GM12878 (cell line): ENCODE measurements at regions of chr21 and their contacts with region 1.

Region 1: DNA sequence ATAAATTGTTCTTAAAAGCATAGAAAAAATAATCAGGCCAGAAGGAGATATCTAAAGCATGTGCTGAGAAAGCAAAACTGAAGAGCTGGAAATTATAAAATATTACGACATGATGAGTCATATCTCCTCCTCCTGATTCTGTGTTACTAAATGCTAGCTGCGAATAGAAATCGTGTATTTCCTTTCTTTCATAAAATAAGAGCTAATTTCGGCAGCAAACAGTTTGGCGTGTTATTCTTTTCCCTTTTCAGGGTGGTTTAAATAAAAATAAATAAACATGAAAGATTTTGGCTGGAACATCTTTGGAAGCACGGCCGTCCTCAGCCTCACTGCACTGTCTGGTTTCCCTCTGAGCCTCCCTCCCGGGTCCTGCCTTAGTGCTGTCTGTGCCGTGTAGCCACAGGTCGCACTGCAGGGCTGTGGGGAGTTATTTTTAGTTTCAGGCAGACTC is 56.0 kb downstream of the ADARB1 start:
- DNase-seq: no peak
- ATAC-seq: peak; percentile 85
- H3K4me3 ChIP-seq: no peak overlapping the region
- H3K27ac ChIP-seq: no peak overlapping the region
- H3K4me1 ChIP-seq: peaks cover 3% of the 10 kb centered on the region
- H3K27me3 ChIP-seq: peaks cover 0 to 2% of the 10 kb centered on the region in 2 experiments; a peak in 2 of 4 replicates
- CTCF ChIP-seq: no peak
- EP300 ChIP-seq: no peak
- POLR2A ChIP-seq: no peak
- RAD21 ChIP-seq: no peak

Region 2: DNA sequence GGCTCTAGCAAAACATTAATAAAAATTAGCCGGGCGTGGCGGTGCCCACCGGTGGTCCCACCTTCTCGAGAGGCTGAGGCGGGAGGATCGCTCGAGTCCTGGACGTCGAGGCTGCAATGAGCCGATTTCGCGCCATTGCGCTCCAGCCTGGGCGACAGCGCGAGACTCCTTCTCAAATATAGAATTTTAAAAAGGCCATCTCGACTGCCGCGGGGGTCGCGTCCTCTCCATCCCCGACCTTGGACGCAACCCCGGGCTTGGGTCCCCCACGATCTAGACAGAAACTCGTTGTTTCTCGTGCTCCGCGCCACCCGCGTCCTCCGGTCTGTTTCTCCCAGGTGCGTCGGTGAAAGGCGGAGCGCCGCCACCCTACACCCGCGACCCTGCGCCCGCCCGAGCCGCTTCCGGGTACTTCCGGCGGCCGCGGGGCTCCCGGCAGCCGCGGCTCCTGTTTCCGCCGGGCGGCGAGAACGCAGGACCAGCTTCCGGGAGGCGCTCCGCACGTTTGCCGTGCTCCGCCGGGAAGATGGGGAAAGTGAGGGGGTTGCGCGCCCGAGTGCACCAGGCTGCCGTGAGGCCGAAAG is 190.7 kb before region 1 on chr21 and contains the start of gene SLX9:
- CTCF ChIA-PET with region 1: interaction called, 235 read pairs
- POLR2A ChIA-PET with region 1: no interaction called
- RAD21 ChIA-PET with region 1: interaction called, 141 read pairs
- SMC1A ChIA-PET with region 1: interaction called, 153 read pairs
- in situ Hi-C with region 1: no loop called
- intact Hi-C with region 1: no loop called
- DNase-seq: no peak
- ATAC-seq: peak; percentile 92
- H3K4me3 ChIP-seq: peak within 1 kb of the TSS; percentile 92
- H3K27ac ChIP-seq: peak within 1 kb of the TSS; percentile 50
- H3K4me1 ChIP-seq: peaks cover 18% of the 10 kb centered on the region
- H3K27me3 ChIP-seq: no peaks in the 10 kb centered on the region
- CTCF ChIP-seq: no peak
- EP300 ChIP-seq: no peak
- POLR2A ChIP-seq: peak; percentile 88
- RAD21 ChIP-seq: no peak
- polyA plus RNA-seq, gene SLX9: 0.69 to 5.5 TPM

Region 3: GRCh38 chr21:44958471-44959191 is 171.7 kb before region 1 on chr21:
- CTCF ChIA-PET with region 1: interaction called, 47 read pairs
- POLR2A ChIA-PET with region 1: no interaction called
- RAD21 ChIA-PET with region 1: interaction called, 141 read pairs
- SMC1A ChIA-PET with region 1: interaction called, 10 read pairs
- in situ Hi-C with region 1: no loop called
- intact Hi-C with region 1: no loop called
- DNase-seq: no peak
- ATAC-seq: no peak
- H3K4me3 ChIP-seq: no peak overlapping the region
- H3K27ac ChIP-seq: no peak overlapping the region
- H3K4me1 ChIP-seq: no peaks in the 10 kb centered on the region
- H3K27me3 ChIP-seq: no peaks in the 10 kb centered on the region
- CTCF ChIP-seq: no peak
- EP300 ChIP-seq: no peak
- POLR2A ChIP-seq: no peak
- RAD21 ChIP-seq: no peak

Region 4: DNA sequence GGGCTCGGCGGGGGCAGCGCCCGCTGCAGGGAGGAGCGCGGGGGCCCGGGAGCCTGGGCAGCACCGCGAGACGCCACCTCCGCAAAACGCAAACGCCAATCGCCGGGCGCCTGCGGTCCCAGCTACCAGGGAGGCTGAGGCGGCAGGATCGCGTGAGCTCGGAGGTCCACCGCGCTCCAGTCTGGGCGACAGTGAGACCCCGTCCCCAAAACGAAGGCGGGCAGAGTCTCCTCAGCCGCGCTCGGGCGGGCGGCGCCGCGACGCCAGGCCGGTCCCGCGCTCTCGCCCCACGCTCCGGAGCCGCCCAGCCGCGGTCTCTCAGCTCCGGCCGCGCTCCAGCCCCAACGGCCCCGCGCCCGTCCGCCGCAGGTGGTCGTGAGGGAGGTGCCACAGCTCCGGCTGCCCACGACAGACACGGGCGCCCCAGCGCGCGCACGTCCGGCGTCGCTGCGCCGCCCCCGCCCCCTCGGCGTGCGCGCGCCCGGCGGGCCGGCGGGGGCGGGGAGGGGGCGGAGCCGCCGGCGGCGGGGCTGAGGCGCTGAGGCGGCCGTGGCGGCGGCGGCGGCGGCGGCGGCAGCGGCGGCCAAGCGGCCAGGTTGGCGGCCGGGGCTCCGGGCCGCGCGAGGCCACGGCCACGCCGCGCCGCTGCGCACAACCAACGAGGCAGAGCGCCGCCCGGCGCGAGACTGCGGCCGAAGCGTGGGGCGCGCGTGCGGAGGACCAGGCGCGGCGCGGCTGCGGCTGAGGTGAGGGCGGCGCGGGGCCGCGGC is 56.1 kb before region 1 on chr21 and contains the start of gene ADARB1:
- CTCF ChIA-PET with region 1: interaction called, 50 read pairs
- POLR2A ChIA-PET with region 1: interaction called, 4 read pairs
- RAD21 ChIA-PET with region 1: interaction called, 62 read pairs
- SMC1A ChIA-PET with region 1: interaction called, 77 read pairs
- in situ Hi-C with region 1: no loop called
- intact Hi-C with region 1: loop called (anchors 2 kb)
- DNase-seq: no peak
- ATAC-seq: peak; percentile 43
- H3K4me3 ChIP-seq: peak within 1 kb of the TSS; percentile 80; the same call in 1 of the 2 replicates
- H3K27ac ChIP-seq: no peak within 1 kb of the TSS
- H3K4me1 ChIP-seq: 0 out of 2 replicates have a peak, but pooled peaks cover 5% of the 10 kb centered on the region
- H3K27me3 ChIP-seq: peaks cover 0 to 9% of the 10 kb centered on the region in 2 experiments; a peak in 2 of 4 replicates
- CTCF ChIP-seq: no peak
- EP300 ChIP-seq: no peak
- POLR2A ChIP-seq: peak; percentile 76
- RAD21 ChIP-seq: no peak
- polyA plus RNA-seq, gene ADARB1: 5.7 to 9.0 TPM

Region 5: GRCh38 chr21:45098867-45099266 is 31.5 kb before region 1 on chr21:
- CTCF ChIA-PET with region 1: interaction called, 626 read pairs
- POLR2A ChIA-PET with region 1: interaction called, 14 read pairs
- RAD21 ChIA-PET with region 1: interaction called, 204 read pairs
- SMC1A ChIA-PET with region 1: interaction called, 560 read pairs
- in situ Hi-C with region 1: no loop called
- intact Hi-C with region 1: loop called (anchors 1 kb)
- DNase-seq: no peak
- ATAC-seq: peak; percentile 77
- H3K4me3 ChIP-seq: no peak overlapping the region
- H3K27ac ChIP-seq: no peak overlapping the region
- H3K4me1 ChIP-seq: peaks cover under 1% of the 10 kb centered on the region
- H3K27me3 ChIP-seq: no peaks in the 10 kb centered on the region; a peak in 1 of 4 replicates
- CTCF ChIP-seq: peak; percentile 59 to 63 (median 62)
- EP300 ChIP-seq: no peak
- POLR2A ChIP-seq: no peak
- RAD21 ChIP-seq: peak; percentile 61

Region 6: DNA sequence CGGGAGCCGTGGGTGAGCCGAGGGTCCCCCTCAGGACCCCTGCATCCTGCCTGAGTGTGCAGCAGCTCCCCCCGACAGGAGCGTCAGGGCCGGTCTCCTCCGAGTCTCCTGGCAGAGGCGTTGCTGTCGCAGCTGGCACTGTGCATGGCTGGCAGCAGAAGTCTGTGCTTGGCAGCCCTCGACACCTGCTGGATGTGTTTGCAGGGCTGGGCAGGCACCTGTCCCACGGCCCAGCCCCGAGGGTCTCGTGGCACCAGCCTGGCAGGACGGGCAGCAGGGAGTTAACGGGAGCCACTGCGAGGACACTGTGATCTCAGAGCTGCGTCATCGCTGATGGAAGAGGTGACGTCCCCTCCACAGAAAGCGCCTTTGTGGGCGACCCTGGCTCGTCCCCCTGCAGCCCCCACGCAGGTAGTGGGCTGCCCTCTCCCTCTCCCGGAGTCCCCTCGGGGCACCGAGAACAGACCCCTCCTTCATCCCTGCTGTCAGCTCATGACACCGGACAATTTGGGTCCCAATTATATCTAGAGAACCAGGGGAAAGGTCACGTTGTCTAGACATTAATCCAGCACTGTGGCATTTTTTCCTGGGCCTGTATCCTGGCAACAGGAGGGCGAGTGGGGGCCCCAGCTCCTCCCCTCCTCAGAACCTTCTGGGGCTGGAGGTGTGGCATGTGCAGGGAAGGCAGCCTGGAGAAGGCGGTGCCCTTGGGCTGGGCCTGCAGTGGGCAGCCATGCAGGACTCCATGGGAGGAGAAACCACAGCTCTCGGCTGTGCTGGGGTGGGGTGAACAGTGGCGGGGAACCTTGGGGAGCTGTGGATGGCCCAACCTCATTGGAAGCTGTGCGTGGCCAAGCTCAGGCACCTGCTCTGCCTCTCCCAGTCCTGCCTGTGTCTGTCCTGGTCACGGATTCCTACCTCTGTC is 290.0 kb after region 1 on chr21:
- CTCF ChIA-PET with region 1: no interaction called
- POLR2A ChIA-PET with region 1: no interaction called
- RAD21 ChIA-PET with region 1: no interaction called
- SMC1A ChIA-PET with region 1: no interaction called
- in situ Hi-C with region 1: no loop called
- intact Hi-C with region 1: no loop called
- DNase-seq: no peak
- ATAC-seq: no peak
- H3K4me3 ChIP-seq: no peak overlapping the region
- H3K27ac ChIP-seq: no peak overlapping the region
- H3K4me1 ChIP-seq: no peaks in the 10 kb centered on the region
- H3K27me3 ChIP-seq: peaks cover 0 to 2% of the 10 kb centered on the region in 2 experiments; a peak in 1 of 4 replicates
- CTCF ChIP-seq: no peak
- EP300 ChIP-seq: no peak
- POLR2A ChIP-seq: no peak
- RAD21 ChIP-seq: no peak